ENCODE measurements at regions of chr7 and their contacts with region 1.

Region 1: DNA sequence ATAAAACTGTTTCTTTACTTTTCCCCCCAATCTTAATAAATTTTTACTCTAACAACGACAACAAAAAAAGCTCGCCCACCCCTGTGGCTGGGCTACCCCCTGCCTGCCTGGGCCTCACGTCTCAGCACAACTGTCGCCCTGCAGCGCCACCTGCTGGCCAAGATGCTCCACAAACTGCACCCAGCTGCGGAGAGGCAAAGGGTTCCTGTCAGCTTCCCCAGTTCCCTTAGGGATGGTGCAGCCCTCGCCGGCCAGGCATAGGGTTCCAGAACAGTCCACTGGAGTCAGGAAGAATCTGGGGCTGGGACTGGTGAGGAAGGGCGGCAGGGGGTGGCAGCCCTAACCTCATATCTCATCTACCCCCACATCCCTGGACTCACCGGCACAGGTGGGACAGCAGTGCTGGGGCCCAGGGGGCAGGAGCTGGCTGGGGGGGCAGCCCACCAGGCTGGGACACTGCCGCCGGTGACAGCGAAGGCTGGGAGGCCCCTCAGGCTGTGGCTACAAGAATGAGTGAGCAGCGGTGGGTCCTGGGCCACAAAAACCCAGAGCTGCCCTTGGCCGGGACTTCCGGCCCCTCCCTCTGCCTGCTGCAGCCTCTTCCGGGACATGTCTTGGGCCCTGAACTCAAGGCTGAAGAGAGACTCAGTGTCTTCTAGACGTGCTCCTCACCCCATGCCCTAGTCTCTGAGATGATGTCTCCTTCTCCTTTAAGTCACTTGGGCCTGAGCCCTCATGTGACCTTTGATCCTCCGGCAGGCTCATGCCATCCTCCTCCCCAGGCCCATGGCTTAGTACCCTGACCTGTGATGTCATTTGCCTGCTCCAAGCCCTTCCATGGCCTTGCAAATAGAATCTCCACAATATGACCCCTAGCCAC is 21.2 kb downstream of the ATP6V1F start:
- DNase-seq: peak; percentile 88
- H3K4me3 Mint-ChIP-seq: peak overlapping the region; percentile 0
- H3K27ac Mint-ChIP-seq: no peak overlapping the region
- H3K4me1 Mint-ChIP-seq: peaks cover 1% of the 10 kb centered on the region
- H3K27me3 Mint-ChIP-seq: peaks cover 2% of the 10 kb centered on the region

Region 2: DNA sequence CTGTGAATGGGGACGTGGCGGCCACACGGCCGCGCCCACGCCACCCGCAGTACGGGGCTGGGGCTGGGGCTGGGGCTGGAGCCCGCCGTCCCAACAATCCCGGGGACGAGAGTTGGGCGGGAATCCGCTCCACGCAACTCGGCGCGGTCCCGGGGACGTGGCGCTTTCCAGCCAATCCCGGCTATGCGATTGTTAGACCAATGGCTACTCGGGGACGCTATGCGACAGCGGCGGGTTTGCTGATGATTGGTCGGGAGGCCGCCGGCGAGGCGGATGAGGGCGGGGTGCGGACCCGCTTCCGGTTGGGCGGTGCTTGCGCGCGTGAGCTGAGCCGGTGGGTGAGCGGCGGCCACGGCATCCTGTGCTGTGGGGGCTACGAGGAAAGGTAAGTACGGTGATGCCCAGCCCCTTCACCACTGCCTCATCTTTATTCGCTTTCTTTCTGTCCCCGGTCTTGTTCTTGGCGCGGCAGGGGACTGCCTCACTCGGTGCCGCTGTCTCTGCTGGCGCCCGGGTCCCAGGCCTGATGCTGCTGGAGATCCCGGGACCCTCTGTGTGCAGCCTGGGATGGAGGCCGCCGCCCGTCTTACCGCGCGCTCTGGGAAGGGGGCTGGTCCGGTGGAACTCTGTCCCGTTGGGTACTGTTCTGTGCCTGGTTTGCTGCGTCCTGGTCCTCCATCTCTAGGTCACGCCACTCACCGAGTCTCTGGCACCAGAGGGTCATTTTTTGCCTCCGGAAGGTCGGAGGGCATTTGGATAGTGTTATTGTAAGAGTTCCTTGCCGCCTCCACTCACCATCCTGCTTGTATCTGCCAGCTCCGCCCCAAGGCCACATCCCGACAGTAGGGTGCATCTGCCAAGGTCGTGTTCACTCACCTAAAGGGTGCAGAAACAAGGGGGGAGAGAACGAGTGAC is 144.6 kb before region 1 on chr7 and contains the start of gene CALU:
- CTCF ChIA-PET with region 1: interaction called, 13 read pairs
- POLR2A ChIA-PET with region 1: interaction called, 5 read pairs
- intact Hi-C with region 1: no loop called
- DNase-seq: peak; percentile 97
- H3K4me3 Mint-ChIP-seq: peak within 1 kb of the TSS; percentile 97
- H3K27ac Mint-ChIP-seq: peak within 1 kb of the TSS; percentile 90
- H3K4me1 Mint-ChIP-seq: peaks cover 43% of the 10 kb centered on the region
- H3K27me3 Mint-ChIP-seq: no peaks in the 10 kb centered on the region
- total RNA-seq, gene CALU: 43.2 to 44.2 TPM

Region 3: GRCh38 chr7:128830231-128831177 is 53.4 kb before region 1 on chr7 and contains the start of gene FLNC:
- CTCF ChIA-PET with region 1: interaction called, 14 read pairs
- POLR2A ChIA-PET with region 1: no interaction called
- intact Hi-C with region 1: no loop called
- DNase-seq: peak; percentile 51
- H3K4me3 Mint-ChIP-seq: peak within 1 kb of the TSS; percentile 45
- H3K27ac Mint-ChIP-seq: no peak within 1 kb of the TSS
- H3K4me1 Mint-ChIP-seq: peaks cover 11% of the 10 kb centered on the region
- H3K27me3 Mint-ChIP-seq: peaks cover 38% of the 10 kb centered on the region
- total RNA-seq, gene FLNC: 0.05 TPM in 1 of 2 experiments, not detected in the other

Region 4: DNA sequence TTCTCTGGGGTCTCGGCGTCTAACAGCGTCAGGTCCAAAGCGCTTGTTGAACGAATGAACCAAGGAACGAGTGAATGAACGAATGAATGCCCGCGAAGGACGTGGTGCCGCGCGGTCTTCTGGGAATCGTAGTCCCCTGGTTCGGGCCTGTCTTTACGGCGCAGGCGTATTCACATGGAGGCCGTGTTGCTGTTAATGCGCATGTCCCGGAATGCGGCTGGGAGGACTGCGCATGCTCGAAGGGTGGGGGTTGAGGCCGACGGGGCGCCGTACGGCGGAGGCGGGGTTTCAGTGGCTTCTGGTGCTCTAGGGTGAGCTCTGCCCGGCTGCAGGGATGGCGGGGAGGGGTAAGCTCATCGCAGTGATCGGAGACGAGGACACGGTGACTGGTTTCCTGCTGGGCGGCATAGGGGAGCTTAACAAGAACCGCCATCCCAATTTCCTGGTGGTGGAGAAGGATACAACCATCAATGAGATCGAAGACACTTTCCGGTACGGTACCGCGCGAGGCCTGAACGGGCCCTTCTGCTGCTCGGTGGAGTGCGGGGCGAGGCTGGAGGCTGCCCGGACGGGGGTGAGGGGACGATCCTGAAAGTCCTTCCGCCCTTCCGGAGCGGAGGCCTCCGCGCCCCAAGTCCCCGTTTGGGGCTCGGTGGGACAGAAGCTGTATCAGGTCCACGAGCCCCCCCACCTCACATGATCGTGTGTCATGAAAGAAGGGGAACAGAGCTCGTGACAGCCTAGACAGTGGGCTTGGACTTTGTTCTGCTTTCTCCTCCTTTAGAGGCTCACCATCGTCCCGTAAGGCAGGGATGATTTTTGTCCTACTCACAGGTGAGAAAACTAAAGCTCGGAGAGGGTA is 21.1 kb before region 1 on chr7 and contains the start of gene ATP6V1F:
- CTCF ChIA-PET with region 1: interaction called, 46 read pairs
- POLR2A ChIA-PET with region 1: interaction called, 6 read pairs
- intact Hi-C with region 1: no loop called
- DNase-seq: peak; percentile 100
- H3K4me3 Mint-ChIP-seq: peak within 1 kb of the TSS; percentile 98
- H3K27ac Mint-ChIP-seq: peak within 1 kb of the TSS; percentile 84
- H3K4me1 Mint-ChIP-seq: peaks cover 14% of the 10 kb centered on the region
- H3K27me3 Mint-ChIP-seq: peaks cover 1% of the 10 kb centered on the region
- total RNA-seq, gene ATP6V1F: 113 to 117 TPM

Region 5: GRCh38 chr7:128904381-128905197 is 20.7 kb after region 1 on chr7:
- CTCF ChIA-PET with region 1: interaction called, 12 read pairs
- POLR2A ChIA-PET with region 1: no interaction called
- intact Hi-C with region 1: no loop called
- DNase-seq: no peak
- H3K4me3 Mint-ChIP-seq: no peak overlapping the region
- H3K27ac Mint-ChIP-seq: no peak overlapping the region
- H3K4me1 Mint-ChIP-seq: no peaks in the 10 kb centered on the region
- H3K27me3 Mint-ChIP-seq: peaks cover 21% of the 10 kb centered on the region

Region 6: GRCh38 chr7:128963327-128963757 is 79.5 kb after region 1 on chr7:
- CTCF ChIA-PET with region 1: no interaction called
- POLR2A ChIA-PET with region 1: no interaction called
- intact Hi-C with region 1: no loop called
- DNase-seq: peak; percentile 70
- H3K4me3 Mint-ChIP-seq: no peak overlapping the region
- H3K27ac Mint-ChIP-seq: peak overlapping the region; percentile 73
- H3K4me1 Mint-ChIP-seq: peaks cover 37% of the 10 kb centered on the region
- H3K27me3 Mint-ChIP-seq: no peaks in the 10 kb centered on the region